Pancreas (tissue), 10 donors: ENCODE measurements at regions of chr20 and their contacts with region 1.

Region 1: DNA sequence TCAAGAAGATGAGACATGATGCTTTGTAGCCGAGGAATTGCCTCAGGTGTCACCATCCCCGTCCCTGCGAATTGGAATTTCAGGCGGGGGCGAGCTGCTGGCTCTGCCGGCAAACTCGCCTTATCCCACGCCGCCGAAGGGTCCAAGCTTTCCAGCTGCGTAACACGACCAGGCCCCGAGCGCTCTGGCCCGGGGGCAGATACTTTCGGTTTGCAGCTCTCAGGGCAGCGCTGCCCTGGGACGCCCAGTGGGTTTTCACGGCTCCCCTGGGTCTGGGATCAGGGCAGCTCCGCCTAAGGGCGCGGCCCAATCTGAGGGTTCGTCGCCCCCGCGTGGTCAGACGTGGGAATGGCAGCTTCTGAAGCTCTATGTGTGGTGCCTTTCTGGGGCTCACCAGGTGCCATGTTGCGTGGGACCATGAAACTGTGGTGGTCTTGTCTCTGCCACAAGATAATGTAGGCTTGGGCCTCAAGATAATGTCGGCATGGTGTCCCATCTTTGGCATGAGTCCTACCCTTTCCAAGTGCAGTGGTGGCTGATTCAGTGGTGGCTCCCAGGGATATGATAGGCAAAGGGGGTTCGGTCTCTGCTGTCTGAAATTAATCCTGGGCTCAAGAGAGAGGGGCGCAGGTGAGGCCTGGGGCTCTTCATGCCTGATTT is 20.9 kb downstream of the PIGT start:
- DNase-seq: peak; percentile 79 to 96 (median 88)
- ATAC-seq: peak; percentile 99 to 100 (median 99)
- H3K4me3 ChIP-seq: peak overlapping the region; percentile 26 to 58 (median 38)
- H3K27ac ChIP-seq: peak overlapping the region; percentile 4 to 68 (median 54)
- H3K4me1 ChIP-seq: peaks cover 0 to 4% (median 0%) of the 10 kb centered on the region in 3 donors
- H3K27me3 ChIP-seq: no peaks in the 10 kb centered on the region
- CTCF ChIP-seq: peak; percentile 84 to 95 (median 90)

Region 2: DNA sequence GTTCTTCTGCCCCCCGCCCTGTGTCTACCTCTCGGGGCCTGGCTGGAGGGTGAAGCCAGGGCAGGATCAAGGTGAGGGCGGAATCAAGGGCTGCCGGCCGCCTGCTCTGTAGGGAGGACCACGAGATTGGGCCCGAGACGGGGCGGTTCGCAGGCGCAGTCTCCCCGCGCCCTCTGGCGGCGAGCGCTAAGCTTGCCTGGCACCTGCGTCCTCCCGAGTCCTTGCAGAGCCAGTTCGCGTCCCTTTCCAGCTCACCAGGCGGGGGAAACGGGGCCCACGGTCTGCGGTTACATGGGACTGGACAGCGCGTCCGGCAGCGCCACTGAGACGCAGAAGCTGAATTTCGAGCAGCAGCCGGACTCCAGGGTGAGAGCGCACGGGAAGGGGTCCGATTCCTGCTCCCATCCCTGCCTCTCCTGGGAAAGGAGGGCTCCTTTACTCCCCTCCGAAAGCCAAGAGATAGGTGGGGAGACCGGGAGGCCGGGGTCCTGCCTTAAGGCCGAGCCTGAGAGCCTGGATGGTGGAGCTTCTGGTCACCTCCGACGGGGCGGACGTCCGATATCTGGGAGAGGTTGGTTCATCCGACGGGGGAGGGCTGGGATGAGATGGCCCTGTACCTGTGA is 125.2 kb before region 1 on chr20:
- intact Hi-C with region 1: loop called in 2 of 3 experiments (anchors 5 to 10 kb)
- DNase-seq: peak; percentile 71 to 93 (median 85)
- ATAC-seq: peak; percentile 48 to 73 (median 59)
- H3K4me3 ChIP-seq: peak overlapping the region in 3 of 4 donors; percentile 48 to 64 (median 60)
- H3K27ac ChIP-seq: no peak overlapping the region
- H3K4me1 ChIP-seq: no peaks in the 10 kb centered on the region
- H3K27me3 ChIP-seq: no peaks in the 10 kb centered on the region
- CTCF ChIP-seq: peak; percentile 58 to 77 (median 72)

Region 3: DNA sequence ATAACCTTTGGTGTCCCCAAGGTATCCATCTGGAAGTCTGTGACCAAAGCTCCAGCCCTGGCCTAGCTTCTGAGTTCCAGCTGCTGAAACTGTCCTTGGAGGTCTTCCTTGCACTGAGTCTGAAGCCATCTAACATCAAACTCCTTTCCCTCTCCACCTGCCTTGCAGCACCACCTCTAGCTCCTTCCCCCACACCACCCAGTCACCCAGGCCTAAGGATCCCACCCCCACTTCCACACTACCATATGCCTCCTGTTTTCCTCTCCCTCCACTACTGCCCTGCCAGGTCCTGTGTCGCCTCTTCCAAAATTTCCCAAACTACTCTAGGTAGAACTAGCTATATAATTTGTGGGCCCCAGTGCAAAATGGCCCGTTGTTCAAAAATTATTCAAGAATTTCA is 117.9 kb before region 1 on chr20:
- intact Hi-C with region 1: loop called in 2 of 3 experiments (anchors 5 to 10 kb)
- DNase-seq: no peak
- ATAC-seq: peak in 3 of 4 donors; percentile 1 to 16 (median 4)
- H3K4me3 ChIP-seq: no peak overlapping the region
- H3K27ac ChIP-seq: peak overlapping the region in 2 of 4 donors; percentile 6 to 31
- H3K4me1 ChIP-seq: peaks cover 0 to 11% (median 0%) of the 10 kb centered on the region in 3 donors
- H3K27me3 ChIP-seq: no peaks in the 10 kb centered on the region
- CTCF ChIP-seq: no peak

Region 4: DNA sequence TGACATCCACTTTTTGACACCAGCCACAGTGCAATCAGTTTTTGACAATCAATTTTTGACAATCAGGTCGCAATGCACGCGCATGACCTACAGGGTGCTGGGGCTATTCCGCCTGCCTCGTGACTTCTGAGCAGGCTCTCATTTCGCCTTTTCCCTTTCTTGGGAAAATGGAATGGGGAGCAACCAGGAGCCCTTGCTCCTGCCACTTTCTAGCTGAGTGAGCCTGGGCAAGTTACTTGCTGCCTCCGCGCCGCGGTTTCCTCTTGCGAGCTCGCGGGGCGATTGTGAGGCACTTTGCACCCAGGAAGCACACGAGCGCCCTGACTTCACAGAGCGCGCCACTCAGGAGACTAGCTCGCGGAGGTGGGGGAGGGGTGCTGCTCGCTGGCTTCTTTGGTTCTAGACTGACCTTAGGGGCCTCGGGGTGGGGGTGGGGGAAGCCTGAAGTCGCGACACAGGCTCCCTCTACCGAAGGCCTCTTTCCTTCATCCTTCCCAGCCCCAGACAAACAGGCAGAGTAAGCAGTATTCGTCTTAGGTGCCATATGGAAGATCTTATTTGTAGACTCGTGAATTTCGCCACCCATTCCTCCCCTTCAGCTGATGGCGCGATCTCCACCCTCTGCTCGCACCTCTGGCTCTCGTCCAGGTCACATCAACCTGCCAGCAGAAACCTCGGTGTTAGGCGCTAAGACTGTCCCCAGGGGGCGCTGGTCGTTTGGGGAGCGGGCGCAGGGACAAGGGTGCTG is 63.3 kb before region 1 on chr20:
- intact Hi-C with region 1: loop called in 1 of 3 experiments (anchors 5 kb)
- DNase-seq: peak; percentile 84 to 97 (median 94)
- ATAC-seq: peak; percentile 91 to 97 (median 94)
- H3K4me3 ChIP-seq: peak overlapping the region; percentile 18 to 54 (median 37)
- H3K27ac ChIP-seq: peak overlapping the region in 3 of 4 donors; percentile 6 to 54 (median 26)
- H3K4me1 ChIP-seq: no peaks in the 10 kb centered on the region
- H3K27me3 ChIP-seq: no peaks in the 10 kb centered on the region
- CTCF ChIP-seq: peak; percentile 62 to 86 (median 83)